ENCODE measurements at regions of chr1 and their contacts with region 1.

Region 1: DNA sequence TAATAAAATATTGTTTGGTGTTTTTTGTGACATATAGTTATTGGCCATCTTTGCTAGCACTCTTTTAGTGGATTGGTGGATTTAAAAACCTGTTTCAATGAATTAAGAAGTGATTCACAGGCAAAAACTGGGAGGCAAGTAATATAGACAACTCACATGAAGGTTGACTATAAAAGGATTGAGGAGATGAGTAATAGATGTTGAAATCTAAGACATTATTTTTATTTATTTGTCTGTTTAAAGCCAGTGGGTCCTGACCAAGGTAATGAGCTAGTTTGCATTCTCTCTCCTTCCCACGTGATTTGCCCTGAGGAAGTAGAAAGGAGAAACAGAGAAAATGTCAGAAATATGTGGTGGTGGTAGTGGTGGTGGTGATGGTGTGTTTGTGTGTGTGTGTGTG is 351.5 kb upstream of the ZP4 start:
- DNase-seq: no peak
- H3K4me3 Mint-ChIP-seq: no peak overlapping the region
- H3K27ac Mint-ChIP-seq: no peak overlapping the region
- H3K4me1 Mint-ChIP-seq: no peaks in the 10 kb centered on the region
- H3K27me3 Mint-ChIP-seq: no peaks in the 10 kb centered on the region

Region 2: DNA sequence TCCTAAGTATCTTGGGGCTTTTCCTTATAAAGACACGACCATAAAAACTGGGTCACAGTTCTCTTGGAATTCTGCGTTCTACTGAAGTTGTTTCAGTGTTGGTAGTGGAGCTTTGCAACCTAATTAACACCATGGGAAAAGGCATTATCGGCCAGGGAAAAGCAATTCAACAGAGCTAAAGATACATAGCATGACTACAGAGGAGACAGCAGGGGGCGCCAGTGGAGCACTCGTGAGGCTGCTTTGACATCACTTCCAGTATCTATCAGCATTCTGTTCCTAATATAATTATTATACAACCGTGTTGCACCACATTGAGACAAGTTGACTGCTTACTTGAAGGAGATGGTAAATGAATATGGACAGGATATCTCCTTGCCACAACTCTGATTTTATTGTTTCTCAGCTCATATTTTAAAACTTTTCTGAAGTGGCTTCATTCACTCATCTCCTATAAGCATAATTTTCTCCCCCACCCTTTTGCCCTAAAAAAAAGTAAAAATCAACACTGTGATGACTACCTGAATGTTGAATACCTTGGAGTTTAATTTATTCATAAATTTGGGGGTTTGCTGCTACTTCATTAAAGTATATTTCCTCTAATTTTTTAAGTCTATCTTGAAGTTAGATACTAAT is 390.9 kb before region 1 on chr1:
- CTCF ChIA-PET with region 1: no interaction called
- intact Hi-C with region 1: loop called (anchors 10 kb)
- DNase-seq: peak; percentile 44
- H3K4me3 Mint-ChIP-seq: no peak overlapping the region
- H3K27ac Mint-ChIP-seq: no peak overlapping the region
- H3K4me1 Mint-ChIP-seq: no peaks in the 10 kb centered on the region
- H3K27me3 Mint-ChIP-seq: peaks cover 2% of the 10 kb centered on the region

Region 3: DNA sequence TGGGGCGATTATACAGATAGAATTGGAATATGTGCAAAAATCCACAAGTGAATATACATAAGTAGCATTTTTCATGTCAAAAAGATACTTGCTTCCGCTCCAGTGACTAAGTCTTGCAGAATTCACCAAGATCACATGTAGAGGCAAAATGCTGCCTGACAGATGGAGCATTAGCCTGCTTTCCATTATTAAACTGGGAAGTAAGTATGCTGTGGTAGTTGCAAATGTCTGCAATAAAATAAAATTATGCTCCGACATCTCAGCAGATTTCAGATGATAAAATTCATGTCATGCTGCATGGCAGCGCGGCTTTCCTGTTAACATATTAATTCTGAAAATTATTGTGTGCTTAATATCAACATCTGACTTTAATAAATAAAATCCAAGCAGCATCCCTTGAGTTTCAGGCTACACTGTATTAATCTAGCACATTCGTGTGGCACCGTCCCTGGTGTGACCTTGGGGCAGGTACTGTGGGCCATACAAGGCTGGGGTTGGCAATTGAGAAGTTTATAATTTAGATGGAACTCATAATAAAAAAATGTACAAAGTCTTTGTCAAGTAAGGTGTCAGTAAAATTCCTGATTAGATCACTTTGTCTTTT is 14.9 kb after region 1 on chr1:
- CTCF ChIA-PET with region 1: no interaction called
- intact Hi-C with region 1: no loop called
- DNase-seq: no peak
- H3K4me3 Mint-ChIP-seq: no peak overlapping the region
- H3K27ac Mint-ChIP-seq: no peak overlapping the region
- H3K4me1 Mint-ChIP-seq: no peaks in the 10 kb centered on the region
- H3K27me3 Mint-ChIP-seq: no peaks in the 10 kb centered on the region